ENCODE measurements at regions of chr4 and their contacts with region 1.

Region 1: GRCh38 chr4:164768516-164768915 is 14.6 kb downstream of the SMIM31 start:
- DNase-seq: no peak
- ATAC-seq: no peak
- H3K4me3 Mint-ChIP-seq: no peak overlapping the region
- H3K27ac Mint-ChIP-seq: no peak overlapping the region
- H3K4me1 Mint-ChIP-seq: no peaks in the 10 kb centered on the region
- H3K27me3 Mint-ChIP-seq: peaks cover 11% of the 10 kb centered on the region

Region 2: DNA sequence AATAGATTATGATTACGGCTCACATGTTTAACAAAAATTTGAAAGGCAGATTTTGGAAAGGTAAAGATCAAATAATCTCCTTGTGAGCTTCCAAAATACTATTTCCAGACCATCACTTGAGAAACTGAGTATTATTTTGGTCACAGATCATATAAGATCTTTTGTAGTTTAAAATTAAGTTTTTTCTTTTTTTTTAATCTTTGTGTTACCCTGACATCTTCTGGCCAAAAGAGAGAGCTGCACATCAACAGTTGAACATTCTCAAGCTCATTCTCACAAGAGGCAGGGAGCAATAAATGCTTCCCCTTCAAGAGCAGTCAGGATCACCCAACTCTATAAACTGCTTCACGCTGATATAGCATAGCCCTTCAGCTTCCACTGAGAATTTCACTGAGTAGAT is 328.3 kb after region 1 on chr4:
- CTCF ChIA-PET with region 1: interaction called, 17 read pairs
- DNase-seq: no peak
- ATAC-seq: no peak
- H3K4me3 Mint-ChIP-seq: no peak overlapping the region
- H3K27ac Mint-ChIP-seq: no peak overlapping the region
- H3K4me1 Mint-ChIP-seq: no peaks in the 10 kb centered on the region
- H3K27me3 Mint-ChIP-seq: no peaks in the 10 kb centered on the region

Measured in activated CD8-positive, alpha-beta memory T cell treated with anti-CD3 and anti-CD28 coated beads, Interleukin-2, amount 10 ng/mL, durations not matched to agents 7 days and 5 days (primary cell).